CD8-positive, alpha-beta T cell (primary cell): ENCODE measurements at regions of chr4 and their contacts with region 1.

Region 1: DNA sequence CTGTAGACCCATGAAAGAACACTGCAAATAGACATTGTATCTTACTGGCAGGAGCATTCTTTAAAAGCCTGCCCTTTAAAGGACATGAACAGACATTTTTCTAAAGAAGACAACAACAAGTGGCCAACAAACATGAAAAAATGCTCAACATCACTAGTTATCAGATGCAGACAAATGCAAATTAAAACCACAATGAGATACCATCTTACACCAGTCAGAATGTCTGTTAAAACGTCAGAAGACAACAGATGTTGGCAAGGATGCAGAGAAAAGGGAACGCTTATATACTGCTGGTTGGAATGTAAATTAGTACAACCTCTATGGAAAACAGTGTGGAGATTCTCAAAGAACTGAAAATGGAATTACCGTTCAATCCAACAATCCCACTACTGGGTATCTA is 77.2 kb downstream of the ATP10D start:
- DNase-seq: peak in 2 of 9 experiments; percentile 2 to 3
- ATAC-seq: no peak
- H3K4me3 ChIP-seq: no peak overlapping the region
- H3K4me3 Mint-ChIP-seq: no peak overlapping the region
- H3K27ac ChIP-seq: no peak overlapping the region
- H3K27ac Mint-ChIP-seq: no peak overlapping the region
- H3K4me1 ChIP-seq: no peaks in the 10 kb centered on the region
- H3K4me1 Mint-ChIP-seq: peaks cover 8% of the 10 kb centered on the region
- H3K27me3 ChIP-seq: no peaks in the 10 kb centered on the region
- H3K27me3 Mint-ChIP-seq: no peaks in the 10 kb centered on the region
- CTCF ChIP-seq: no peak

Region 2: GRCh38 chr4:47383829-47384427 is 178.4 kb before region 1 on chr4:
- CTCF ChIA-PET with region 1: interaction called, 3 read pairs
- POLR2A ChIA-PET with region 1: no interaction called
- intact Hi-C with region 1: loop called in 1 of 2 experiments (anchors 10 kb)
- DNase-seq: peak in 2 of 9 experiments; percentile 11 to 38
- ATAC-seq: no peak
- H3K4me3 ChIP-seq: no peak overlapping the region
- H3K4me3 Mint-ChIP-seq: no peak overlapping the region
- H3K27ac ChIP-seq: no peak overlapping the region
- H3K27ac Mint-ChIP-seq: no peak overlapping the region
- H3K4me1 ChIP-seq: no peaks in the 10 kb centered on the region
- H3K4me1 Mint-ChIP-seq: no peaks in the 10 kb centered on the region
- H3K27me3 ChIP-seq: no peaks in the 10 kb centered on the region
- H3K27me3 Mint-ChIP-seq: peaks cover 2% of the 10 kb centered on the region
- CTCF ChIP-seq: peak; percentile 50

Region 3: DNA sequence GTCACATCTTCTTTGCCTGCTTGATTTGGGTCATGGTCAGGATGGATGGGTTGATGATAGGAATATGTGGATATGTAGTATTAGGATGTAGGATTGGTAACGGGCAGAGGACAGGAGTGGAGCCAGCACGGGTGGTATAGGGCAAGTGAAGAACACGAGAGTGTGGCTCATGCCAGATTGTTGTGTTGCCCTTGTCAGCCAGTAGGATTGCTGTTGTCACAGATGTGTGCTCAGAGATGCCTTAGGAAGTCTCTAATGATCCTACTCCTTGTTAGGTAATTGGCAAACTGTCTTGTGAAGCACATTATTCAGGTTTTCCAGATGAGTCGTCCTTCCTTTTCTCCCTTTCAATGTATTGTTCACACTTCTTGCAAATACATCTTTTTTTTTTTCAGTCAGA is 71.7 kb before region 1 on chr4:
- CTCF ChIA-PET with region 1: interaction called, 3 read pairs
- POLR2A ChIA-PET with region 1: interaction called, 3 read pairs
- intact Hi-C with region 1: loop called (anchors 2 kb)
- DNase-seq: peak in 3 of 9 experiments; percentile 10 to 56 (median 45)
- ATAC-seq: peak; percentile 75
- H3K4me3 ChIP-seq: no peak overlapping the region
- H3K4me3 Mint-ChIP-seq: no peak overlapping the region
- H3K27ac ChIP-seq: no peak overlapping the region
- H3K27ac Mint-ChIP-seq: no peak overlapping the region
- H3K4me1 ChIP-seq: peaks cover 9% of the 10 kb centered on the region
- H3K4me1 Mint-ChIP-seq: peaks cover 17% of the 10 kb centered on the region
- H3K27me3 ChIP-seq: no peaks in the 10 kb centered on the region
- H3K27me3 Mint-ChIP-seq: no peaks in the 10 kb centered on the region
- CTCF ChIP-seq: peak; percentile 44

Region 4: GRCh38 chr4:47617607-47618006 is 55.3 kb after region 1 on chr4:
- CTCF ChIA-PET with region 1: no interaction called
- POLR2A ChIA-PET with region 1: no interaction called
- intact Hi-C with region 1: no loop called
- DNase-seq: no peak
- ATAC-seq: no peak
- H3K4me3 ChIP-seq: no peak overlapping the region
- H3K4me3 Mint-ChIP-seq: no peak overlapping the region
- H3K27ac ChIP-seq: no peak overlapping the region
- H3K27ac Mint-ChIP-seq: no peak overlapping the region
- H3K4me1 ChIP-seq: no peaks in the 10 kb centered on the region
- H3K4me1 Mint-ChIP-seq: no peaks in the 10 kb centered on the region
- H3K27me3 ChIP-seq: no peaks in the 10 kb centered on the region
- H3K27me3 Mint-ChIP-seq: peaks cover 4% of the 10 kb centered on the region
- CTCF ChIP-seq: no peak